ENCODE measurements at regions of chr2 and their contacts with region 1.

Region 1: DNA sequence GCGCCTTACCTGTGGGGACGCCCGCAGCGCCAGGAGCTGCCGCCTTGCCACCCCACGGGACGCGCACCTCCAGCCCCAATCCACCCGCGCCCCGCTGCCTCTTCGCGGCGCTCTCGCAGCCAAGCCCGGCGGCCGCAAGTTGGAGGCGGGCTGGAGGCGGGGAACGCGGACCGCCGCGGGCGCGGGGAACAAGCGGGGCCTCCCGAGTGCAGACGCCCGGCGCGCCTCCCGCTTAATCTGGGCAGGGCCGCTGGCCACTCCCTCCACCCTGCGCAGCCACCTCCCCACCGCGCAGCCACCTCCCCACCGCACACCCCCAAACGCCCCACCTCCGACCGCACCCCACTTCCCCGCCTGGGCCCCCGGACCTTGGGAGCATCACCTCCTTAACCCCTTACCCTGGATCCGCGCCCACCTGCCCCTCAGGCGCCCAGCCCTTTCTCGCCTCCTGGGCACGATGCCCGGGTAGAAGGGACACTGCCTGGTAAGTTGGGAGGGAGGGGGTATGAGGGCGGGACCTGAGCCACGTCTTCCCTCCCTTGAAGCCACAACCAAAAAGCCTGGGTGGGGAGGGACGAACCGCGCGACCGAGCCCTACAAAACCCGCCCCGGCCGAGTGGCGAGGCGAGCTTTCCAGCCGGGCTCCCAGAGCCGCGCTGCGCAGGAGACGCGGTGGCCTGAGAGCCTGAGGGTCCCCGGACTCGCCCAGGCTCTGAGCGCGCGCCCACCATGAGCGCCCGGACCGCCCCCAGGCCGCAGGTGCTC is at the starts of genes COL4A3 and COL4A4:
- DNase-seq: peak; percentile 52 to 84
- ATAC-seq: peak; percentile 81 to 85 (median 84)
- H3K4me3 ChIP-seq: peak within 1 kb of the TSS; percentile 94
- H3K27ac ChIP-seq: peak within 1 kb of the TSS; percentile 97
- H3K4me1 ChIP-seq: peaks cover 53% of the 10 kb centered on the region
- H3K27me3 ChIP-seq: no peaks in the 10 kb centered on the region
- CTCF ChIP-seq: no peak
- total RNA-seq, gene COL4A3: 5.5 to 29.4 (median 14.9) TPM
- total RNA-seq, gene COL4A4: 4.6 to 16.0 (median 10.3) TPM

Region 2: DNA sequence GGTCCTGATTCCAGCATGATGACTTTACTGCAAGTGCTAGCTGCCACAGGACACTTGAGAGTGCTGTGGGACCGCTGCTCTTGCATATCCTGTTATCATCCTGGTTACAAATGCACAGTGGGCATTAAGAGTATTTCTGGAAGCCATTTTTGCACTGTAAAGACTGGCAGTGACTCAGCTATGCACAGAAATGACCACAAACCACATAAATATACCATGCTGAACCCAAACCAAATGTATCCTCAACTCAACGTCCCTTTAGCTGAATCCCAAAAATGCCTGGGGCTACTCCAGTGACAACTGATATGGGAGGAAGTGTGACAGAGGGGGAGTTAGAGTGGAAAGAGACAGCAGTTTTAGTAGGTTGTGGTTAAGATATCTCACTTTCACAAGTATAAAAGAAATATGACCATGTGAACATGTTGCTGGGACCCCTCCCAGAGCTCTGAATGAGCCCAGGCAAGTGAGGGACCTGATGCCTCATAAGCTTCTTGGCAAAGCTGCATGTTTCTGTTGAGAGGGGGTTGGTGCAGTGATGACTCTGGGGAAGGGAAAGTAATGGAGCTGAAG is 291.0 kb before region 1 on chr2:
- intact Hi-C with region 1: no loop called
- DNase-seq: no peak
- ATAC-seq: no peak
- H3K4me3 ChIP-seq: no peak overlapping the region
- H3K27ac ChIP-seq: no peak overlapping the region
- H3K4me1 ChIP-seq: no peaks in the 10 kb centered on the region
- H3K27me3 ChIP-seq: no peaks in the 10 kb centered on the region
- CTCF ChIP-seq: no peak

Region 3: DNA sequence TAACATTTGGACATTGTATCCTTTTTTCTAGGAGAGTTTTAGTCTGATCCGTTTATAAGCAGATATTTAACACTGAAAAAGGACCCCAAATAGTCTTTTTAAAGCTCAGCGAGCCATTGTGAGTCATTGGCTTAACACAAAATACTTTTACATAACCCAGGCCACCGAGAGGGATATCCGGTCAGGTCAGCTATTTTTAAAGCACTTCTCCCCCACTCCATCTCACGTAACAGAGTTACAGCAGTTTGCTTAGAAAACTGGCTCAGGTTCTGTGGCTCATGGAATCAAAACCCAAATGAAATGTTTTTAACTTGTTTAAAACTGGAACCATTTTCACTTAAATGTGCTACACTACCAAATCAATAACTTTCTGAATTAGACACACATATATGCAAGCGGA is 24.1 kb after region 1 on chr2:
- intact Hi-C with region 1: loop called in 1 of 2 experiments (anchors 2 kb)
- DNase-seq: no peak
- ATAC-seq: peak; percentile 86 to 91 (median 90)
- H3K4me3 ChIP-seq: peak overlapping the region; percentile 17
- H3K27ac ChIP-seq: peak overlapping the region; percentile 92
- H3K4me1 ChIP-seq: peaks cover 60% of the 10 kb centered on the region
- H3K27me3 ChIP-seq: no peaks in the 10 kb centered on the region
- CTCF ChIP-seq: no peak

Region 4: GRCh38 chr2:227221120-227221519 is 56.9 kb after region 1 on chr2:
- intact Hi-C with region 1: loop called in 1 of 2 experiments (anchors 1 kb)
- DNase-seq: no peak
- ATAC-seq: no peak
- H3K4me3 ChIP-seq: no peak overlapping the region
- H3K27ac ChIP-seq: no peak overlapping the region
- H3K4me1 ChIP-seq: no peaks in the 10 kb centered on the region
- H3K27me3 ChIP-seq: no peaks in the 10 kb centered on the region
- CTCF ChIP-seq: no peak

Region 5: GRCh38 chr2:227228061-227228667 is 64.0 kb after region 1 on chr2:
- intact Hi-C with region 1: loop called in 1 of 2 experiments (anchors 1 kb)
- DNase-seq: peak; percentile 91 to 97
- ATAC-seq: peak; percentile 92 to 98 (median 97)
- H3K4me3 ChIP-seq: no peak overlapping the region
- H3K27ac ChIP-seq: peak overlapping the region; percentile 86
- H3K4me1 ChIP-seq: peaks cover 21% of the 10 kb centered on the region
- H3K27me3 ChIP-seq: no peaks in the 10 kb centered on the region
- CTCF ChIP-seq: no peak

Measured in psoas muscle (tissue), 8 donors.